Posterior cingulate gyrus (tissue), 11 donors: ENCODE measurements at regions of chr11 and their contacts with region 1.

Region 1: GRCh38 chr11:66842896-66843775 is at the start of gene RCE1:
- DNase-seq: peak; percentile 85 to 98 (median 88)

Region 2: DNA sequence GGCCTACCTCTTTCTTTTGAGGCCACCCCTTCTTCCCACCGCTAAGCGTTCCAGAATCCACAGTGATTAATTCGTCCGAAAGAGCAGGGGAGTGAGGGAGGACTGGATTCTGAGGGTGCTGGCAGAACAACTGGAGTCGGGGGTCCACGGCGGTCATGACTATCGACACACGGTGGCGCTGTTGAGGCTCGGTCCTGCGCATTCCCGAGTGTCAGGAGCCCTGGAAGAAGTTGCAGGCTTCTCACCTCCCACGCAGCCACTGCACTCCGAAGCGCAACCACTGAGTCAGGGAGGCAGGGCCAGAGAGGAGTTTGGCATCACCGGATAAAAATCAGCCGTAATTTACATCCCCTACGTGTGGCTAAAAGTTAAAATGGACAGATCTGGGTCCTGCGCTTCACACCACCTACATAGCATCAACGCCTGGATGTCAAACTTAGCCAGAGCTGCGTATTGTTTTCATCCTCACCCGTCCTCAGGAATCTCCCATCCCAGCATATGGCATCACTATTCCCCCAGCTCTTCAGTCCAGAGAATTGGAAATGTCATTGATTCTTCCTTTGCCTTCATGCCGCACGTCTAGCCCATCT is 264.0 kb before region 1 on chr11:
- intact Hi-C with region 1: loop called (anchors 10 kb)
- DNase-seq: peak; percentile 62 to 96 (median 82)

Region 3: GRCh38 chr11:66744485-66745340 is 98.4 kb before region 1 on chr11:
- intact Hi-C with region 1: loop called (anchors 5 kb)
- DNase-seq: peak; percentile 71 to 97 (median 79)

Region 4: DNA sequence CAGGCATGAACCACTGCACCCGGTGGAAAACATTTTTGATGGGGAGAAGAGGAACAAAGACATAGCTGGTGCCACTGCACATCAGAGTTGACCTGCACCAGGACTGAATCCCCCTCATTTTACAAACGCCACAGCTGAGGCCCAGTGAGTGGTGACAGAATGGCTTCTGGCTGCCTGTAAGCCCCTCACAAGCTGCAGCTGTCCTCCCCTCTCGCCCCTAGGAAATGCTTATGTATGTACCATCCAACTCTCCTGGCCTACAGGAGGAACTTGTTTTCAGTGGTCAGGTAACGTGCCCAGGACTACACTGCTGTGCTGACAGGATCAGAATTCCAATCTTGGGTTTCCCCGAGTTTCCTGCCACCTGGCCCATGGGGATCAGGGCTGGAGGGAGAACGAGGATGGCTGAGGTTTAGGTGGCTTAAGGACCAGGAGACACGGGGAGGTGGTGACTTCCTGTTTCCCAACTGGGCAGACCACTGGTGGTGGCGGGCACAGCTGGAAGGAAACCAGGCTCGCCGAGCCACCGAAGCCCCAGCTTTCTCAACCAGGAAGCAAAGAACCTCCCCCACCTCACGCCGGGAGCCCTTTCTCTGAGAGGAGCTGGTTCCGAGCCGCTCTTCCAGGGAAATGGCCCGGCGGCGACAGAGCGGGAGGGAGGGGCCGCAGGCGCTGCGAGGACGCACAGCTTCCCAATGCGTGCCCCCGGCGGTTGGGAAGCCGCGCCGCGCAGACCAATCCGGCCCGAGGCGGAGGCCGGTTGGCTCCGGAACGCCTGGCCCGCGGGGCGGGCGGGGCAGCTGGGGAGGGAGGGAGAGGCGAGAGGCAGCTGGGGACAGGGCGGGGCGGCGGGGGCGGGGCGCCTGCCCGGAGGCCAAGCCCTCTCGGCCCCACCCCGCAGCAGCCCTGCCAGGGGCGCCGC is 12.7 kb after region 1 on chr11:
- intact Hi-C with region 1: loop called (anchors 1 kb)
- DNase-seq: peak; percentile 77 to 99 (median 94)

Region 5: DNA sequence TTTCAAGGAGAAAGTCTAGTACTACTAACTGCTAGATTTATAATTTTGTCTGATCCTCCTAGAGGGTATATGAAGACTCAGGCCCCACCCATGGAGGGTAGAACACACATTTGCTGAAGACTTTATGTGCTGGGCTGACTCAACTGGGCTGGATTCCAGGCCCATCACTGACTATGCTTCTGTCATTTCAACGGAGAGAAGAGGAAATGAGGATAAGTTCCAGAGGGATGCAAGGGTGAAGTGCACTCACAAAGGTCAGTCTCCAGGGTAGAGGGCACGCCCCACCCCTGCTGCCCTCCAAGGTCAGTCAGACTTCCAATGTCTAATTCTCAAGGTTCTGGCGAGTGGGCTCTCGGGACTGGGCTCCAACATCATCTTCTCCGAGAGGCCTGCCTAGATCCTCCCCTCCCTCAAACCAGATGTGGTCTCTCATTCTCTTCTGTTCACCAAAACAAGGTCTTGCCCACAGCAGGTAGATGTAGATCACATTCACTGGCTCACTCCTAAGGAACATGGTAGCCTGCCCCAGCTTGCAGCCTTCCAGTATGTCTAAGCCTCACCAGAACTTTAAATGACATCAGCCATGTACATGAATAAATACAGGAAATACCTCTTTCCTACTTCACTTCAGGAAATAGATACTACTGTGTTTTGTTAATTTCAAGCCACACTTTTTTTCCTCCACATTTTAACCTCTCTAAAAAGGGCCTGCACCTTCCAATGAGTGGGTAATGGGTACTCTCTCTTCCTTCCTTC is 124.7 kb after region 1 on chr11:
- intact Hi-C with region 1: no loop called
- DNase-seq: peak in 1 of 10 donors; percentile 20